ENCODE measurements at regions of chr14 and their contacts with region 1.

Region 1: DNA sequence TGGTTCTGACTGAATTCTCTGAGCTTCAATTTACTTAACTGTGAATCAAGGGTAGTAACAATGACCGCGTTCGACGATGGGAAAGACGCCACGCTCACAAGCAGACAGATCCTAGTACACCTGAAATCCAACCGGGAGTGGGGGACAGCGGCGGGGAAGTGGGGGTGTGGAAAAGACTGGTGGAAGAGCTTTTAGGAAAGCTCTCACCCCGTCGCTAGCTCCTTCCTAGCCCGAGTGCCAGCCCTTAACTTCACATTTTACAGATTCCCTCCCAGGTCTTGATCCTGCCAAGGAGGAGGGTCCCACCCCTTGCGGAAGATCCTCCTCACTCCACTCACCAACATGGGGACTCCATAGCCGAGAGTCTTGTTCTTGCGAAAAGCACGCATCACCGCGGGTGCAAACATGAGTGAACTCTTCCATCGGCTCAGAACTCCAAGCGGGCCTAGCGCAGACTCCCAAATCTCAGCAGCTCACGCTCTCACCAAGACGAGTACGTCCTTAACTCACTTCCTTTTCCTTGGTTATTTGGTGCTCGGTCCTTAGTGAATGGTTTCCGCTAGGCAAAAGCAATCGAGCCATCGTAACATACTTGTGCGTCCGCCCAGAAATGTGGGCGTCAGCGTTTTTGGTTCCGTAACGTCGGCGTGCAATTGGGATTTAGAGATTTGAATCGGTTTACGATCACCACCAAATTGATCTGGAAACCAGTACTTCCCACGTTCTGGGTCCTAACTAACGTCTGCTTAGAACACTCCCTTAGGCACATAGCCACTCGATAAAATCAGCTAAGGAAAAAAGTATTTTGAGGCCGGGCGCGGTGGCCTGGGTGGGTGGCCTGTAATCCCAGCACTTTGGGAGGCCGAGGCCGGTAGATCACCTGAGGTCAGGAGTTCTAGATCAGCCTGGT is at the start of gene COX16:
- DNase-seq: peak; percentile 78
- H3K4me3 Mint-ChIP-seq: peak within 1 kb of the TSS; percentile 96
- H3K27ac Mint-ChIP-seq: peak within 1 kb of the TSS; percentile 78
- H3K4me1 Mint-ChIP-seq: peaks cover 28% of the 10 kb centered on the region
- H3K27me3 Mint-ChIP-seq: peaks cover 16% of the 10 kb centered on the region
- total RNA-seq, gene COX16: 67.0 and 69.7 TPM in 2 replicates

Region 2: GRCh38 chr14:69153131-69153872 is 1206.1 kb before region 1 on chr14:
- intact Hi-C with region 1: loop called (anchors 2 kb)
- DNase-seq: peak; percentile 93
- H3K4me3 Mint-ChIP-seq: peak overlapping the region; percentile 91
- H3K27ac Mint-ChIP-seq: peak overlapping the region; percentile 92
- H3K4me1 Mint-ChIP-seq: peaks cover 28% of the 10 kb centered on the region
- H3K27me3 Mint-ChIP-seq: peaks cover 35% of the 10 kb centered on the region

Region 3: GRCh38 chr14:70203686-70204085 is 155.8 kb before region 1 on chr14:
- intact Hi-C with region 1: no loop called
- DNase-seq: no peak
- H3K4me3 Mint-ChIP-seq: no peak overlapping the region
- H3K27ac Mint-ChIP-seq: no peak overlapping the region
- H3K4me1 Mint-ChIP-seq: no peaks in the 10 kb centered on the region
- H3K27me3 Mint-ChIP-seq: peaks cover 37% of the 10 kb centered on the region

Region 4: GRCh38 chr14:70289138-70289537 is 70.3 kb before region 1 on chr14:
- intact Hi-C with region 1: loop called (anchors 1 kb)
- DNase-seq: no peak
- H3K4me3 Mint-ChIP-seq: no peak overlapping the region
- H3K27ac Mint-ChIP-seq: no peak overlapping the region
- H3K4me1 Mint-ChIP-seq: no peaks in the 10 kb centered on the region
- H3K27me3 Mint-ChIP-seq: peaks cover 12% of the 10 kb centered on the region

Region 5: DNA sequence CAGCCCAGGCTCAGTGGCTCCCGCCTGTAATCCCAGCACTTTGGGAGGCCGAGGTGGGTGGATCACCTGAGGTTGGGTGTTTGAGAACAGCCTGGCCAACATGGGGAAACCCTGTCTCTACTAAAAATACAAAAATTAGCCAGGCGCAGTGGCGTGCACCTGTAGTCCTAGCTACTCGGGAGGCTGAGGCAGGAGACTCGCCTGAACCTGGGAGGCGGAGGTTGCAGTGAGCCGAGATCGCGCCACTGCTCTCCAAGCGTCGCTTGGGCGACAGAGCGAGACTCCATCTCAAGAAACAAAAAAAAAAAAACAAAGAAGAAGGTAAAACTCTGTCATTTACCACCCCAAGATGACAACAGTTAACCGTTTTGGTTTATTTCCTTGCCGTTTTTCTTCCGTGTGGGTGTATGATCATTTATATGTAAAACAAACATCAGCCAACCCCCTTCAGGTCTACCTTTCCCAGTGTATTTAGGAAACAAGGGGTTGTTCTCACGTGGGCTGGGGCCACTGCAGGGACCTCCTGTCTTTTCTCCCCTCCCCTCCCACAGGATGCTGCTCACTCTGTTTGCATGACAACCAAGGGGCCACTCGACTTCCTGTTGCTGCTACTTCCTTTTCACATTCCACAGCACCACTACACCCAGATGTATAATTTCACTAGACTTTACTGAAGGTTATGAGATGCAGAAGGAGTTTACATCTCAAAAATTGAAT is 295.8 kb after region 1 on chr14:
- intact Hi-C with region 1: loop called (anchors 10 kb)
- DNase-seq: peak; percentile 77
- H3K4me3 Mint-ChIP-seq: peak overlapping the region; percentile 81
- H3K27ac Mint-ChIP-seq: peak overlapping the region; percentile 99
- H3K4me1 Mint-ChIP-seq: peaks cover 74% of the 10 kb centered on the region
- H3K27me3 Mint-ChIP-seq: no peaks in the 10 kb centered on the region

Region 6: DNA sequence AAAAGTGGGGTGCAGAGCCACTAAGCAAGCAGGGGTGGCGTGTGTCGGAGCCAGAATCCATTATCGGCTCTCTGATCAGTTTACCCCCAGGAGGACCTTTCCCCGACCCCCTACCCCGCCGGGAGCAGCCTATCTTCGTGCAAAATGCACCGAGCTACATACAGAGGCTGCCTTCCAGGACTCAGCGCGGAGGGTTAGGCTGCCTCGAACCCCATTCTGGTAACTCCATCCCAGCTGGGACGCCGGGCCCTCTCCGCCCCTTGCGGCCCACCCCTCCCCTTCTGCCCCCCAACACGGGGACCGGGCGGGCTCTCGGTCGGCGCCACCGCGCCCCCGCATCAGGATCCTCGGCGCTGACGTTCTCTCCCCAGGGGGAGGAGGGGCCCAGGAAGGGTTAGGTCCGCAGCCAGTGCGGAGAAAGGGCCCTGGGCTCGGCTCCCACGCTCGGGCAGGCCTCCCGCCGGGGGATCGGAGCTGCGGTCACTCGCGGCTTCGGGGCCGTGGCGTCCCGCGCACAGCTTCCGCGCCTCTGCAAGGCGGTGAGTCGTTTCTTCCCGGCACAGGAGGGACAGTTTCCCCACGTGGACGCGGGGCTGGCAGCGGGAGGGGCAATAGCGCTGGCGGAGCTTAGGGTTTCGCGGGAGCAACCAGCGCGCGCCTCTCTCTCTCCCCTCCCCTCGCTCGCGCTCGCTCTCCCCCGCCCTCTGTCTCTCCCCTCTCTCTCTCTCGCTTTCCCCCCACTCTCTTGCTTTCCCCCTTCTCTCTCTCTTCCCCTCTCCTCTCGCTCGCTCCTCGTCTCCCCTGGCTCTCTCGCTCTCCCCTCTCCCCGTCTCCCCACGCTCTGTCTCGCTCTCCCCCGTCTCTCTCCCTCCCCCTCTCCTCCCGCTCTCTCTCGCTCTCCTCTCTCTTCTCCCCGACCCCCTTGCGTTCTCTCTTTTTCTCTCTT is 462.4 kb after region 1 on chr14:
- intact Hi-C with region 1: loop called (anchors 1 kb)
- DNase-seq: peak; percentile 43
- H3K4me3 Mint-ChIP-seq: peak overlapping the region; percentile 84
- H3K27ac Mint-ChIP-seq: peak overlapping the region; percentile 68
- H3K4me1 Mint-ChIP-seq: peaks cover 29% of the 10 kb centered on the region
- H3K27me3 Mint-ChIP-seq: peaks cover 21% of the 10 kb centered on the region

Measured in activated T-helper 2 cell treated with anti-CD3 and anti-CD28 coated beads, Interferon-gamma antibody, Interleukin-2, Interleukin-4, amounts not matched to agents 10 μg/mL and 5 μg/mL and 100 μg/mL, durations not matched to agents 14 hours and 24 hours and 36 hours (primary cell).